CD8-positive, alpha-beta T cell (primary cell): ENCODE measurements at regions of chr3 and their contacts with region 1.

Region 1: DNA sequence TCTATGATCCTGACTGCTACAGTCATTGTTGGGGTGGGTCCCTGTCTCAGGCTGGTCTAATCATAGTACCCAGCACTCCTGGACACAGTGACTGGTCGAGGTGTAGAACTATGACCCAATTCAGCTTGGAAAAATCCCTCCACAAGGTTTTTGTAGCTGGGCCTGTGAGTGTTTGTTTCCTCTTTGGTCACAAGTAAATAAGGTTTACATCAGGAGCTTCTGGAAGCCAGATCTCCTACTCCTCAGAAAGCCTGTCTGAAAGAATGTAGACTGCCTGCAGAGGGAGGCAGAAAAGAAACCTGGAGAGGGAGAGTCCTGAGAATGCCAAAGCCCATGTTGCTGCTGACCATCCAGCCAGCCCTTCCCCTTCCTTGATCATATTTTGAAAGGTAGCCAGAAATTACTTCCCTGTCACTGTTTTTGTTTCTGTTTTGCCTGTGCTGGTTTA is 123.2 kb downstream of the RAP2B start:
- DNase-seq: no peak
- ATAC-seq: no peak
- H3K4me3 ChIP-seq: no peak overlapping the region
- H3K4me3 Mint-ChIP-seq: no peak overlapping the region
- H3K27ac ChIP-seq: peak overlapping the region in 1 of 2 experiments; percentile 55
- H3K27ac Mint-ChIP-seq: peak overlapping the region; percentile 72
- H3K4me1 ChIP-seq: peaks cover 27% of the 10 kb centered on the region
- H3K4me1 Mint-ChIP-seq: peaks cover 48% of the 10 kb centered on the region
- H3K27me3 ChIP-seq: no peaks in the 10 kb centered on the region
- H3K27me3 Mint-ChIP-seq: no peaks in the 10 kb centered on the region
- CTCF ChIP-seq: no peak

Region 2: GRCh38 chr3:153209596-153209995 is 75.6 kb before region 1 on chr3:
- CTCF ChIA-PET with region 1: interaction called, 40 read pairs
- POLR2A ChIA-PET with region 1: interaction called, 4 read pairs
- intact Hi-C with region 1: loop called (anchors 1 to 5 kb)
- DNase-seq: peak in 1 of 9 experiments; percentile 43
- ATAC-seq: no peak
- H3K4me3 ChIP-seq: no peak overlapping the region
- H3K4me3 Mint-ChIP-seq: peak overlapping the region; percentile 50
- H3K27ac ChIP-seq: no peak overlapping the region
- H3K27ac Mint-ChIP-seq: no peak overlapping the region
- H3K4me1 ChIP-seq: peaks cover 13% of the 10 kb centered on the region
- H3K4me1 Mint-ChIP-seq: peaks cover 36% of the 10 kb centered on the region
- H3K27me3 ChIP-seq: no peaks in the 10 kb centered on the region
- H3K27me3 Mint-ChIP-seq: no peaks in the 10 kb centered on the region
- CTCF ChIP-seq: no peak

Region 3: DNA sequence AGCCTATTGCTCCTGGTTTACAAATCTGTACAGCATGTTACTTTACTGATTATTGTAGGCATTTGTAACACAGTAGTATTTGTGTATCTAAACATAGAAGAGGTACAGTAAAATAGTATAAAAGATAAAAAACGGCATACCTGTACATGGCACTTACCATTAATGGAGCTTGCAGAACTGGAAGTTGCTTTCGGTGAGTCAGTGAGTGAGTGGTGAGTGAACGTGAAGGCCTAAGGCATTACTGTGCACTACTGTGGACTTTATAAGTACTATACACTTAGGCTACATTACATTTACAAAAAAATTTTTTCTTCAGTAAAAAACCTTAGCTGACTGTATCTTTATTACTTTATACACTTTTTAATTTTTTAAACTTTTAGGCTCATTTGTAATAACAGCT is 32.3 kb before region 1 on chr3:
- CTCF ChIA-PET with region 1: interaction called, 3 read pairs
- POLR2A ChIA-PET with region 1: interaction called, 6 read pairs
- intact Hi-C with region 1: loop called in 1 of 2 experiments (anchors 5 kb)
- DNase-seq: no peak
- ATAC-seq: no peak
- H3K4me3 ChIP-seq: no peak overlapping the region
- H3K4me3 Mint-ChIP-seq: no peak overlapping the region
- H3K27ac ChIP-seq: no peak overlapping the region
- H3K27ac Mint-ChIP-seq: no peak overlapping the region
- H3K4me1 ChIP-seq: peaks cover 10% of the 10 kb centered on the region
- H3K4me1 Mint-ChIP-seq: peaks cover 34% of the 10 kb centered on the region
- H3K27me3 ChIP-seq: no peaks in the 10 kb centered on the region
- H3K27me3 Mint-ChIP-seq: no peaks in the 10 kb centered on the region
- CTCF ChIP-seq: no peak

Region 4: GRCh38 chr3:153350420-153350819 is 65.2 kb after region 1 on chr3:
- CTCF ChIA-PET with region 1: no interaction called
- POLR2A ChIA-PET with region 1: no interaction called
- intact Hi-C with region 1: no loop called
- DNase-seq: no peak
- ATAC-seq: no peak
- H3K4me3 ChIP-seq: no peak overlapping the region
- H3K4me3 Mint-ChIP-seq: no peak overlapping the region
- H3K27ac ChIP-seq: no peak overlapping the region
- H3K27ac Mint-ChIP-seq: no peak overlapping the region
- H3K4me1 ChIP-seq: no peaks in the 10 kb centered on the region
- H3K4me1 Mint-ChIP-seq: no peaks in the 10 kb centered on the region
- H3K27me3 ChIP-seq: no peaks in the 10 kb centered on the region
- H3K27me3 Mint-ChIP-seq: no peaks in the 10 kb centered on the region
- CTCF ChIP-seq: no peak